Esophagus muscularis mucosa (tissue), 4 donors: ENCODE measurements at regions of chr15 and their contacts with region 1.

Region 1: GRCh38 chr15:79184465-79184892 is 93.9 kb upstream of the RASGRF1 start:
- DNase-seq: no peak
- H3K4me3 ChIP-seq: no peak overlapping the region
- H3K27ac ChIP-seq: no peak overlapping the region
- H3K4me1 ChIP-seq: no peaks in the 10 kb centered on the region
- H3K27me3 ChIP-seq: no peaks in the 10 kb centered on the region
- CTCF ChIP-seq: peak; percentile 86 to 98 (median 98)
- EP300 ChIP-seq: no peak
- POLR2A ChIP-seq: no peak

Region 2: GRCh38 chr15:78909791-78910228 is 274.7 kb before region 1 on chr15:
- intact Hi-C with region 1: loop called (anchors 5 kb)
- DNase-seq: no peak
- H3K4me3 ChIP-seq: no peak overlapping the region
- H3K27ac ChIP-seq: no peak overlapping the region
- H3K4me1 ChIP-seq: peaks cover 32 to 43% (median 41%) of the 10 kb centered on the region in 4 donors
- H3K27me3 ChIP-seq: no peaks in the 10 kb centered on the region
- CTCF ChIP-seq: peak; percentile 48 to 67 (median 56)
- EP300 ChIP-seq: no peak
- POLR2A ChIP-seq: no peak

Region 3: DNA sequence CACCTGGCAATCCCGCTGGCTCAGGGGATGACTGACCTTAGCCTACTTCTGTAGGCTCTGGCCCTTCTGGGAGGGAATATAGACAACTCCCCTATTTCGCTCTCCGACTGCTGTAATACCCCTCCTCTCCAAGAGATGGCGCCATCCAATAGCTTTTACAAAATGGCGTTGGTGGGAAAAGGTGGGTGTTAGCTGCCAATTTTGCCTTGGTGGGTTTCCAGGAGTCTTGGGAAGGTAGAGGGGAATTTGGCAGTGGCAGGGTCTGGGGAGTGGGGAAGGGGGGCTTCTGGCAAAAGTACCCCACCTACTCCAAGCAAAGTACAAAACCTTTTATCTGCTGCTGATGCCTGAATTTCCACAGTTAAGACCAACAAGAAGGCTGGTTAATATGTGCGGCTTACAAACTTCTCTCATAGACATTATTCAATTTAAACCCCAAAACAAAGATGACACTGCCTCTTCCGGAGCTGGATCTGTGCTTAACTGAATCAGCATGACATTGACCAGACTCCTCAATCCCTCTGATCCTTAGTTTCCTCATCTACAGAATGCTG is 156.0 kb before region 1 on chr15:
- intact Hi-C with region 1: loop called (anchors 2 kb)
- DNase-seq: no peak
- H3K4me3 ChIP-seq: no peak overlapping the region
- H3K27ac ChIP-seq: no peak overlapping the region
- H3K4me1 ChIP-seq: no peaks in the 10 kb centered on the region
- H3K27me3 ChIP-seq: peaks cover 0 to 10% (median 0%) of the 10 kb centered on the region in 4 donors
- CTCF ChIP-seq: peak; percentile 57 to 69 (median 64)
- EP300 ChIP-seq: no peak
- POLR2A ChIP-seq: no peak